GM13977 (cell line): ENCODE measurements at regions of chr7 and their contacts with region 1.

Region 1: DNA sequence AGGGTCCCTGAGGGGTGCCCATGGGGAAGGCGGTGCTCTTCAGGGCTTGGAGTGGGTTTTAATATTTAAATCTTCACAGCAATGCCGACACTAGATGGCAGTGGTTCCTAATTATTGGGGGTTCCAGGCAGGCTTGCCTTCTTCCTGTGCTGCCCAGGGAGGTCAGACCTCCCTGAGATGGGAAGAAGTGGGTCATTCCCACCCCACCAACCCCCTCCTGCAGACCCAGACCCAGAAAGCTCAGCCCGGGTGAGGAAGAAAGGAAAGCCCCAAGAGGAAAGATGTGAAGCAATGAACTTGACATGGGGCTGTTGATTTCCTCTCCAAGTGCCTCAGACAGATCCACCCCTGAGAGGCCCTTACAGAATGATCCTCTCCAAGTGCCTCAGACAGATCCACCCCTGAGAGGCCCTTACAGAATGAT is 85.1 kb upstream of the LANCL2 start:
- DNase-seq: peak; percentile 67
- CTCF ChIP-seq: peak; percentile 76

Region 2: GRCh38 chr7:54637712-54638396 is 642.2 kb before region 1 on chr7:
- in situ Hi-C with region 1: no loop called
- DNase-seq: no peak
- CTCF ChIP-seq: no peak

Region 3: DNA sequence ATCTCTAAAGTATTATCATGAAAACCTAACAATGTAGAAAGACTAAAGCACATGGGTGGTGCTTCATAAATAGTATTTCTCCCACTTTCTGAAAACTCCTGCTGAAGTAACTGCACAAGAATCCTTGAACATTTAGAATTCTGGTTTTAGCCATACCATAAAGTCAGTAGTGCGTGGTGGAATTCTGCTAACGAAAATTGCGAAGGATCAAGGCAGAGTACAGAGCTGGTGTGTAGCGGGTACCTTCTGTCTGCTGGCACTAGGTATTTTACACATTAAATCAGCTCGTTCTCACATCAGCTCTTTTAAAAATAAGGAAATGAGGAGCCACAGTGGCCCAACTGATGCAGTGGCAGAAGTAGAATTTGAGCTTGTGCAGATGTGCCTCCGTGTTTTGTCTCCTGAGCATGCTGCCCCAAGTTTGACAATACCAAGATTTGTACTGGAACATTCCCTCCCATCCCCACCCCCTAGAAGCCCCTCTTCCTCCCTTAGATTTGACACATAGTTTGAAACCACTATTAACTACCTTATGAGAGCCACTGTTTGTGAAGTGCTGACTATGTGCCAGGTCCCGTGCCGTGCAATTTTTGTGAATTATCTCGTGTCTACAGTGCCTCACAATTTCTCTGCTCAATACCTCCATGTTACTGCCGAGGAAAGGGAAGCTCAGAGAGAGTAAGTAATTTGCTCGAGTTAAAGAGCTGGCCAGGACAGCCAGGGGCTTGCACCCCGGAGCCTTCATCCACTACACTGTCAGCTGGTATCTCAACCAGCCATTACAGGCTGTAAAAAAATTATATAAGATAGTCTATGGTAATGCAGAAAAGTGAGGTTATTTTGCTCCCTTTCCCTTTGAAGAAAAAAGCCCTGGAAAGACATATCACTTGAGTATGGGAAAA is 194.3 kb before region 1 on chr7:
- in situ Hi-C with region 1: no loop called
- DNase-seq: no peak
- CTCF ChIP-seq: no peak

Region 4: DNA sequence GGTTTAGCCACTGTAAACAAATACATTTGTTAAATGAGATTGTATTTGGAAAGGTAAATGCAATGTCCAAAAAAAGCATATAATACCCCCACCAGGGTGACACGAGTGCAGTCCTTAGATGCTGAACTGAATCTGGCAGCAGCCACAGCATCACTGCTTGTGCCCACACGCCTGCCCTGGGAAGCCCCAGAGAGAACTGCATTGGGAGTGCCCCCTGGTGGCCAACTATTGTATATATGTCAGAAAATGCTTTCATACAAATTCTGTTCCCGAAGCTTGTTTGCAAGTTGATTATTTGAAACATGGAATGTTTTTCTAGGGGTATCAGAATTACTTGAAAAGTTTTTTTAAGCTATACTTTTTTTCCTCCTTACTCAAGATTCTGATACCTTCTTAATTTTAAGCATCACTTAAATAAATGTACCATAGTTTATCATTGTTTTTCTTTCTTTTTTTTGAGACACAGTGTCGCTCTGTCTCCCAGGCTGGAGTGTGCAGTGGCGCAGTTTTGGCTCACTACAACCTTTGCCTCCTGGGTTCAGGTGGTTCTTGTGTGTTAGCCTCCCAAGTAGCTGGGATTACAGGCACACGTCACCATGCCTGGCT is 135.2 kb after region 1 on chr7:
- in situ Hi-C with region 1: loop called (anchors 10 kb)
- DNase-seq: peak; percentile 83
- CTCF ChIP-seq: peak; percentile 68

Region 5: DNA sequence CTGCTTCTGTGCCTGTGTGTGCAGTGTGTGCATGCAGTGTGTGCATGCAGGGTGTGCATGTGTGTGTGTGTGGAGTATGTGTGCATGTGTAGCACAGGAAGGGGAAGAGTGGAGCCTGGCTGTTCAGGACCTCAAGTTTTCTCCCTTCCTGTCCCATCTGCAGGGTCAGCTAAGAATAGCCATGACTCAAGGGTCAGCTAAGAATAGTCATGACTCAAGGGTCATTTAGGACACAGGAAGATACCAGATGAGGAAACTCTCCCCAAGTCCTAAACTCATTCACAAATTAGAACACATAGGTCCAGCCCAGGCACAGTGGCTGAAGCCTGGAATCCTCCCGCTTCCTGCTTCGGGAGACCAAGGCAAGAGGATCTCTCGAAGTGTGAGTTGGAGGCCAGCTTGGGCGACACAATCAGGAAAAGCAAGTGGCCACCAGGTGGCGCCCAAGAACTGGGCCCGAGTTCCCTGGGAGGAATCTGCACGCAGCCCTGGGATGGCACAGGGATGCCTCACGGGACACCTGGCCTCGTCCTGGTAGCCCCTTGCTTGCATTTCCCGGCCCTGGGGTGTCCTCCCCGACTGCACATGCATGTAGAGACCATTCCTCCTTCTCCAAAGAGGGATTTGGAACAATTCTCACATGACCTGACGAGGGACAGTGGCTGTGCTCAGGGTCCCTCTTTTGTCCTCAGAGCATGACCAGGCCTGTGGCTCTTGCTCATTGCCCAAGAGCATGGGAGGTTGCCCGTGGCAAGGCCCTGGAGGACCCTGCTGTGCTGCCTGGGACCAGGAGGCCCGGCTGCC is 313.7 kb after region 1 on chr7:
- in situ Hi-C with region 1: loop called (anchors 25 kb)
- DNase-seq: peak; percentile 56
- CTCF ChIP-seq: peak; percentile 90

Region 6: DNA sequence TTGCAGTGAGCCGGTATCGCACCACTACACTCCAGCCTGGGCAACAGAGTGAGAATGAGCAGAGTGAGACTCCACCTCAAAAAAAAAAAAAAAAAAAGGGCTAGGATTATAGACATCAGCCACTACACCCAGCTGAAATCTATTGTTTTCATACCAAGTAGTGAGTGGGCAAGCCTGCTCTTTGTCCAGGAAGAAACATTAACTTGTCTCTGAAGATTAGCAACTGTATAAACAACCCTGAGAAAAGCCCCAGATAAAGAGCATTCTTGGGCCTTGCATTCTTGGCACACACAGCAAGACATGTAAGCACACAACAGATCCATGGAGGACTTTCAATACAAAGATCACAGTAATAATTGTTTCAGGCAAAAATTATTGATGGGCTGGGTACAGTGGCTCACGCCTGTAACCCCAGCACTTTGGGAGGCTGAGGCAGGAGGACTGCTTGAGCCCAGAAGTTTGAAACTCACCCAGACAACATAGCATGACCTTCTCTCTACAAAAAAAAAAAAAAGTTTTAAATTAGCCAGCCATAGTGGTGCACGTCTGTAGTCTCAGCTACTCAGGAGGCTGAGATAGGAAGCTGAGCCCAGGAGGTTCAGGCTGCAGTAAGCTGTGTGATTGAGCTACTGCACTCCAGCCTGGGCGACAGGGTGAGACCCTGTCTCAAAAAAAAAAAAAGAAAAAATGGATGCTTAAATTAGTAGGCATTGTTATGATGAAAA is 766.8 kb after region 1 on chr7:
- in situ Hi-C with region 1: no loop called
- DNase-seq: no peak
- CTCF ChIP-seq: no peak